Right ventricle myocardium superior (tissue), 1 donor: ENCODE measurements at regions of chr3 and their contacts with region 1.

Region 1: GRCh38 chr3:14780927-14781507 is 37.7 kb upstream of the FGD5 start:
- DNase-seq: peak; percentile 68
- ATAC-seq: peak; percentile 91

Region 2: DNA sequence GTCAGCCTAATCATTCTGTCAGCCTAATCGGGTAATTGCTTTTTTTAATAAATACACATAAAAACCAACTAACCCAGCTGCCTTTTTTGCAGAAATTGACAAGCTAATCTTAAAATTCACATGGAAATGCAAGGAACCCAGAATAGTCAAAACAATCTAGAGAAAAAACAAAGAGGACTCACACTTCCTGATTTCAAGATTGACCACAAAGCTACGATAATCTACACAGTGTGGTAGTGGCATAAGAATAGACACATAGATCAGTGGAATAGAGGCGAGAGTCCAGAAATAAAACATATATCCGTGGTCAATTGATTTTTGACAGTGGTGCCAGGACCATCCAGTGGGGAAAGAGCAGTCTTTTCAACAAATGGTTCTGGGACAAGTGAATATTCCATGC is 108.4 kb before region 1 on chr3:
- intact Hi-C with region 1: loop called (anchors 2 kb)
- DNase-seq: no peak
- ATAC-seq: no peak